ENCODE measurements at regions of chr1 and their contacts with region 1.

Region 1: DNA sequence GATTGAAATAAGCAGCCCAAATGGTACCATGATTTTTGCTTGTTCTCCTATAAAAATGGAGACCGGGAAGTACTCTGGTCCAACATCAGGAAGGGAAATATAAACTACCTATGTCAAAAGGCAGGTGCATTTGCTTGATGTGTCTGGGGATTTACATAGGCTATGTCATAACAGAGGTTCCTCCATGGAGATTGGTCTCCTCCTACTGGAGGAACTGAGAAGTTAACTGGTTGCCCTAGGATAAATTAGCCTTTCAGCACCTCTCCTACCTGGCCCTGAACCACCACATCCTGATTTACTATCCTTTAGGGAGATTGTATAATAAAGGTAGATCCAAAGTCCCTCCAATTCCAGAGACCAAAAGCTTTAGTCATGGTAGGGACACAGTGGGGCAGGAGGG is 1109.3 kb upstream of the B3GALT2 start:
- DNase-seq: peak in 7 of 9 donors; percentile 51 to 78 (median 69)
- ATAC-seq: peak; percentile 94
- H3K4me3 ChIP-seq: no peak overlapping the region
- H3K4me3 Mint-ChIP-seq: no peak overlapping the region
- H3K27ac ChIP-seq: no peak overlapping the region
- H3K27ac Mint-ChIP-seq: peak overlapping the region in 4 of 9 donors; percentile 10 to 71 (median 56)
- H3K4me1 ChIP-seq: peaks cover 2 to 9% of the 10 kb centered on the region in 2 donors
- H3K4me1 Mint-ChIP-seq: peaks cover 8 to 25% (median 20%) of the 10 kb centered on the region in 7 donors
- H3K27me3 ChIP-seq: no peaks in the 10 kb centered on the region
- H3K27me3 Mint-ChIP-seq: no peaks in the 10 kb centered on the region

Region 2: GRCh38 chr1:192808518-192809306 is 1487.0 kb before region 1 on chr1 and contains the start of gene RGS2:
- CTCF ChIA-PET with region 1: no interaction called
- POLR2A ChIA-PET with region 1: no interaction called
- intact Hi-C with region 1: loop called (anchors 1 to 5 kb)
- DNase-seq: peak; percentile 79 to 88 (median 85)
- ATAC-seq: peak; percentile 94
- H3K4me3 ChIP-seq: peak within 1 kb of the TSS; percentile 91
- H3K4me3 Mint-ChIP-seq: peak within 1 kb of the TSS; percentile 92 to 99 (median 98)
- H3K27ac ChIP-seq: peak within 1 kb of the TSS; percentile 76
- H3K27ac Mint-ChIP-seq: peak within 1 kb of the TSS; percentile 91 to 98 (median 96)
- H3K4me1 ChIP-seq: peaks cover 0 to 27% of the 10 kb centered on the region in 2 donors
- H3K4me1 Mint-ChIP-seq: peaks cover 17 to 33% (median 26%) of the 10 kb centered on the region in 7 donors
- H3K27me3 ChIP-seq: no peaks in the 10 kb centered on the region
- H3K27me3 Mint-ChIP-seq: peaks cover 0 to 16% (median 0%) of the 10 kb centered on the region in 5 donors
- total RNA-seq, gene RGS2: 3.5 to 317 (median 12.2) TPM

Region 3: GRCh38 chr1:193121616-193122593 is 1173.8 kb before region 1 on chr1 and contains the start of gene CDC73:
- CTCF ChIA-PET with region 1: no interaction called
- POLR2A ChIA-PET with region 1: no interaction called
- intact Hi-C with region 1: loop called in 1 of 2 experiments (anchors 1 kb)
- DNase-seq: peak; percentile 97 to 100 (median 99)
- ATAC-seq: peak; percentile 96
- H3K4me3 ChIP-seq: peak within 1 kb of the TSS; percentile 85
- H3K4me3 Mint-ChIP-seq: peak within 1 kb of the TSS; percentile 88 to 99 (median 95)
- H3K27ac ChIP-seq: peak within 1 kb of the TSS; percentile 91
- H3K27ac Mint-ChIP-seq: peak within 1 kb of the TSS; percentile 92 to 98 (median 96)
- H3K4me1 ChIP-seq: peaks cover 21 to 25% of the 10 kb centered on the region in 2 donors
- H3K4me1 Mint-ChIP-seq: peaks cover 33 to 68% (median 47%) of the 10 kb centered on the region in 7 donors
- H3K27me3 ChIP-seq: no peaks in the 10 kb centered on the region
- H3K27me3 Mint-ChIP-seq: peaks cover 0 to 11% (median 0%) of the 10 kb centered on the region in 5 donors
- total RNA-seq, gene CDC73: 57.6 to 65.0 (median 58.8) TPM

Region 4: GRCh38 chr1:193241132-193241827 is 1054.4 kb before region 1 on chr1:
- CTCF ChIA-PET with region 1: no interaction called
- POLR2A ChIA-PET with region 1: no interaction called
- intact Hi-C with region 1: loop called in 1 of 2 experiments (anchors 1 kb)
- DNase-seq: no peak
- ATAC-seq: peak; percentile 14
- H3K4me3 ChIP-seq: no peak overlapping the region
- H3K4me3 Mint-ChIP-seq: peak overlapping the region in 1 of 10 donors; percentile 66
- H3K27ac ChIP-seq: no peak overlapping the region
- H3K27ac Mint-ChIP-seq: peak overlapping the region in 7 of 9 donors; percentile 7 to 84 (median 39)
- H3K4me1 ChIP-seq: peaks cover 0 to 8% of the 10 kb centered on the region in 2 donors
- H3K4me1 Mint-ChIP-seq: peaks cover 9 to 41% (median 33%) of the 10 kb centered on the region in 7 donors
- H3K27me3 ChIP-seq: no peaks in the 10 kb centered on the region
- H3K27me3 Mint-ChIP-seq: no peaks in the 10 kb centered on the region

Region 5: DNA sequence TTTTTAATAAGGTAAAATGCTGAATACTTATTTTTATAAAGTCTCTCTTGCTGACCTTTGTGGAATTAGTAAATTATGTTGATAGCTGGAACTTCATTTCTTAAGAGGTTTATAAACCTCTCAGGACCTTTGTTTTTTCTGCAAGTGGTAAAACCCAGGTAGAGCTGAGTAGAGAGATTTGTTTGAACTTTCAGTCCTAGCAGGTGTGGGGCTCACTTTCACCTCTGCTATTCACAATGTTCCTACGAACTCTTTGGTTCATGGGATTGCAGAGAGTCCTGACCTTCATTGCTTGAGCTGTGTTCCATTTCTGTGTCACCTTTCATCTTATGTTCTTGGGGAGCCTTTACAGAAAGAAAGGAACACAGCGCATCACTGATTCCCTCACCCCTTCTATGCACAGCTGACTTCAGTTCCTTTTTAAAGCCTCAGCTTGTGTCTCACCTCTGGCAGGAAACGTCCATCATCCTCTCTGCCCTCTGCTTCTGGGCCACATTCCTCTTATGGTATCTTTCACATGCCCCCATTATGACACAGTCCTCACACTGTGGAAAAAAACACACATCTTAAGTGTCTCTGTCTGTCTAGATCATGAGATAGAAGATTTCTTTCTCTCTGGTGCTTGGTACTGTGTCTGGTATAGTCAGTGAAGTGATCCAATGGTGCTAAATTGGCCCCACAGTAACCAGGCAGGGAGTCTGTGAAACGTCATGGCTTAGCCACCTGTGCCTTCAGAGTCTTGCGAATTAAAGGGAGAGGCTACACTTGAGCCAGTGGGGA is 846.8 kb before region 1 on chr1:
- CTCF ChIA-PET with region 1: no interaction called
- POLR2A ChIA-PET with region 1: no interaction called
- intact Hi-C with region 1: loop called in 1 of 2 experiments (anchors 1 kb)
- DNase-seq: peak in 2 of 9 donors; percentile 13 to 19
- ATAC-seq: peak; percentile 50
- H3K4me3 ChIP-seq: no peak overlapping the region
- H3K4me3 Mint-ChIP-seq: peak overlapping the region in 8 of 10 donors; percentile 1 to 36 (median 13)
- H3K27ac ChIP-seq: peak overlapping the region; percentile 3
- H3K27ac Mint-ChIP-seq: peak overlapping the region; percentile 1 to 80 (median 63)
- H3K4me1 ChIP-seq: peaks cover 0 to 7% of the 10 kb centered on the region in 2 donors
- H3K4me1 Mint-ChIP-seq: peaks cover 8 to 20% (median 15%) of the 10 kb centered on the region in 7 donors
- H3K27me3 ChIP-seq: no peaks in the 10 kb centered on the region
- H3K27me3 Mint-ChIP-seq: no peaks in the 10 kb centered on the region

Region 6: DNA sequence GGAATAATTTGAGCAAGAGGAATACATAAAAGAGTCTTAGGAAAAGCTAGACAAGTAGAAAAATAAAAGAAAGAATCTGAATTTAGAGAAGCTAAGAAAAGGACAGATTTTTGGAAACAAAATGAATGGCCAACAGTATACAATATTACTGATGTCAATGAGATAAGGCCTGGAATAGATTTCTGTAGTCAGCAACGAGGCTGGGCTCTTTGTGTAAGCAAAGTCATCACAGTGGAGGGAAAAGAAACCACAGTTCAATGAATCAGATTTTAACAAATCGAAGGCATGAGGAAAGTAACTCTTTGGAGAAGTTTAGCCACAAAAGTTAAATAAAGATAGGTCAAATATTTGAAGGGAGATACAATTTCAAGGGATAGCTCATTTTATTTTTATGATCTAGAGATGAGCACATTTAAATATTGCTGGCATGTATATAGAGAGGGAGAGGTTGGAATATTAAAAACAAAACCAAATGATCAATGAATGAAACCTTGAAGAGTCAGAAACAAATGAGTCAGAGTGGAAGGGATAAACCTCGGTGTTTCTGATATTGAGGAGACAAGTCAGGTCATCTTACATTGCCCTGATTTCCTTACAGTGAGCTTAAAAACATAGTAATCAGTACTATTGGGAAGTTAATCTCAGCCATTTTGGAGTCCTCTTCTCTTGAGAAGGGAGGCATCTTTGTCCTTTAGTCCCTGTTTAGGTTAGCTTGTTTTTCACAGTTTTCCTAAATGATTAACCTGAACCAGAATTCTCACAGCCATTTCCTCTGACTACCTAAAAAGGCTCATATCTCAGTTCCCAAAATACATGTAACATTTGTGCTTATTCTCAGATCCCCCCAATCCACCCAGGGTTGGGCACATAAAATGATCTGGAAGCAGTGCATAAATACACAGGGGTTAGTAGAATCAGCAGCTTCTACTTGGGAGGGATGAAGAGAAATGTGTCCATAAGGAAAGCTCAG is 489.3 kb before region 1 on chr1:
- CTCF ChIA-PET with region 1: no interaction called
- POLR2A ChIA-PET with region 1: no interaction called
- intact Hi-C with region 1: no loop called
- DNase-seq: no peak
- ATAC-seq: no peak
- H3K4me3 ChIP-seq: no peak overlapping the region
- H3K4me3 Mint-ChIP-seq: no peak overlapping the region
- H3K27ac ChIP-seq: no peak overlapping the region
- H3K27ac Mint-ChIP-seq: peak overlapping the region in 1 of 9 donors; percentile 14
- H3K4me1 ChIP-seq: no peaks in the 10 kb centered on the region
- H3K4me1 Mint-ChIP-seq: peaks cover 0 to 8% (median 0%) of the 10 kb centered on the region in 7 donors
- H3K27me3 ChIP-seq: no peaks in the 10 kb centered on the region
- H3K27me3 Mint-ChIP-seq: no peaks in the 10 kb centered on the region

Region 7: DNA sequence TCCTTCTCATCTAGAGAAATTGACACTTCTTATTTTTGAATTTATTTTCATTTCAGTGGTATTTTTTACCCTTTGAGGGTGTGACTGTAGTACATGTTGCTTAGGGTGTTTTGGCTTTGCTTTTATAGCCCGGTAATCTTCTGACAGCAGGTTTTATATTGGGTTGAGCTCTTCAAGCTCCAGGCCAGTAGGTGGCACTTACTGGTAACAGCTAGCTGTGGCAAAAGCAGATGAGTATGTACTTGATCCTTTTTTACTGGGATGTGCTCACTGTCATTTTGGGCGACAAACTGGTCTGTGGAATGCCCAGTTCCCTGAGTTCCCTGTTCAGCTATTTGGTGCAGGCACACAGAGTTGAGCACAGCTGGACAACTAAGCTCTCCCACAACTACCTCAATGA is 193.1 kb before region 1 on chr1:
- CTCF ChIA-PET with region 1: no interaction called
- POLR2A ChIA-PET with region 1: no interaction called
- intact Hi-C with region 1: loop called in 1 of 2 experiments (anchors 2 kb)
- DNase-seq: no peak
- ATAC-seq: no peak
- H3K4me3 ChIP-seq: no peak overlapping the region
- H3K4me3 Mint-ChIP-seq: no peak overlapping the region
- H3K27ac ChIP-seq: no peak overlapping the region
- H3K27ac Mint-ChIP-seq: no peak overlapping the region
- H3K4me1 ChIP-seq: no peaks in the 10 kb centered on the region
- H3K4me1 Mint-ChIP-seq: peaks cover 0 to 20% (median 0%) of the 10 kb centered on the region in 7 donors
- H3K27me3 ChIP-seq: no peaks in the 10 kb centered on the region
- H3K27me3 Mint-ChIP-seq: no peaks in the 10 kb centered on the region

Region 8: DNA sequence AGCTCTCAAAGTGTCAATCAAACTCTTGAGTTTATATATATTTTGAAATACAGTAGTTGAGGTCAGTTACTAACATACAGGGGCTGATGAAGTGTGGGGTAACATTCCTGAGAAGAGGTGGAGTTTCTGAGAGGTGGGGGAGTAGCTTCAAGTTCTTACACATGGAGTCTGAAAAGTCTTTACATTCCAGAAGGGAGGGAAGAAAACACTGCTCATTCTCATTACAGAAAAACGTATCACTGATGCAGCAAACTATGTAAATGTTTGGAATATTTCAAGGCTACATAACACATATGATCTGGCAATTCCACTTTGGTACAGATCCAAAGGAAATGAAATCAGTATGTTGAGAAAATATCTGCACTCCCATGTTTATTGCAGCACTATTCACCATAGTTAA is 43.5 kb before region 1 on chr1:
- CTCF ChIA-PET with region 1: no interaction called
- POLR2A ChIA-PET with region 1: no interaction called
- intact Hi-C with region 1: no loop called
- DNase-seq: no peak
- ATAC-seq: no peak
- H3K4me3 ChIP-seq: no peak overlapping the region
- H3K4me3 Mint-ChIP-seq: no peak overlapping the region
- H3K27ac ChIP-seq: no peak overlapping the region
- H3K27ac Mint-ChIP-seq: no peak overlapping the region
- H3K4me1 ChIP-seq: no peaks in the 10 kb centered on the region
- H3K4me1 Mint-ChIP-seq: no peaks in the 10 kb centered on the region
- H3K27me3 ChIP-seq: no peaks in the 10 kb centered on the region
- H3K27me3 Mint-ChIP-seq: no peaks in the 10 kb centered on the region

Region 9: GRCh38 chr1:194277927-194278326 is 17.8 kb before region 1 on chr1:
- CTCF ChIA-PET with region 1: no interaction called
- POLR2A ChIA-PET with region 1: no interaction called
- intact Hi-C with region 1: no loop called
- DNase-seq: no peak
- ATAC-seq: no peak
- H3K4me3 ChIP-seq: no peak overlapping the region
- H3K4me3 Mint-ChIP-seq: no peak overlapping the region
- H3K27ac ChIP-seq: no peak overlapping the region
- H3K27ac Mint-ChIP-seq: peak overlapping the region in 1 of 9 donors; percentile 23
- H3K4me1 ChIP-seq: no peaks in the 10 kb centered on the region
- H3K4me1 Mint-ChIP-seq: peaks cover 0 to 18% (median 10%) of the 10 kb centered on the region in 7 donors
- H3K27me3 ChIP-seq: no peaks in the 10 kb centered on the region
- H3K27me3 Mint-ChIP-seq: no peaks in the 10 kb centered on the region

Region 10: GRCh38 chr1:194477908-194478307 is 182.2 kb after region 1 on chr1:
- CTCF ChIA-PET with region 1: no interaction called
- POLR2A ChIA-PET with region 1: no interaction called
- intact Hi-C with region 1: no loop called
- DNase-seq: no peak
- ATAC-seq: no peak
- H3K4me3 ChIP-seq: no peak overlapping the region
- H3K4me3 Mint-ChIP-seq: no peak overlapping the region
- H3K27ac ChIP-seq: no peak overlapping the region
- H3K27ac Mint-ChIP-seq: no peak overlapping the region
- H3K4me1 ChIP-seq: no peaks in the 10 kb centered on the region
- H3K4me1 Mint-ChIP-seq: no peaks in the 10 kb centered on the region
- H3K27me3 ChIP-seq: no peaks in the 10 kb centered on the region
- H3K27me3 Mint-ChIP-seq: peaks cover 0 to 3% (median 0%) of the 10 kb centered on the region in 5 donors